ENCODE measurements at regions of chr2 and their contacts with region 1.

Region 1: DNA sequence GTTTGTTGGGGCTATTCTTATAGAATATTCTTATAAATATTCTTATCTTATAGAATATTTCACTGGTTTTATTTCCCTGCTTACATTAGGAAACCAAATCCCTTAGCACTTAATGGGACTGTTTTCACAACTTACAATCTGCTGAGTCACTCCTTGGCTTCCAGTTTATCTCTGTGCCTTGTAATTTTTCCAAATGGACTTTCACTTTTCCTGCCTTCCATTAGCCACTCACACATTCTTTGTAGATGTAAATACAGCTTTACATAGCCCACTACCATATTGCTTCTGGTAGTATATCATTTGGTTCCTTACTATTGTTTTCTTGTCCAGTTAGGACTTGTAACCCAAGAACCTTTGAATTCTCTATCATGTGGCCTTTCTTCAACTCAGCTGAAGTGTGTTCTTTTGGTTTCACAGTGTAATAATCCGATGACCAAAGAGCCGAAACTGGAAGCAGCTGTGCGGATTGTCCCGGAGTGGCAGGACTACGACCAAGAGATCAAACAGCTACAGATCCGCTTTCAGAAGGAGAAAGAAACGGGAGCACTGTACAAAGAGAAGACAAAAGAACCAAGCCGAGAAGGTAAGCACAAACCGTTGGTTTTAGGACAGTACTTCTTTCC is 96.1 kb downstream of the UGGT1 start:
- DNase-seq: no peak
- ATAC-seq: no peak
- H3K4me3 ChIP-seq: no peak overlapping the region
- H3K4me3 Mint-ChIP-seq: no peak overlapping the region
- H3K27ac ChIP-seq: no peak overlapping the region
- H3K27ac Mint-ChIP-seq: peak overlapping the region in 1 of 2 donors; percentile 12
- H3K4me1 ChIP-seq: no peaks in the 10 kb centered on the region
- H3K4me1 Mint-ChIP-seq: peaks cover 0 to 3% (median 0%) of the 10 kb centered on the region in 3 donors
- H3K27me3 ChIP-seq: no peaks in the 10 kb centered on the region
- H3K27me3 Mint-ChIP-seq: no peaks in the 10 kb centered on the region

Region 2: GRCh38 chr2:126467367-126468054 is 1719.6 kb before region 1 on chr2:
- CTCF ChIA-PET with region 1: no interaction called
- POLR2A ChIA-PET with region 1: interaction called in 1 of 2 experiments, 13 read pairs
- DNase-seq: peak in 2 of 35 experiments; percentile 10 to 16
- ATAC-seq: peak in 1 of 4 experiments; percentile 32
- H3K4me3 ChIP-seq: no peak overlapping the region
- H3K4me3 Mint-ChIP-seq: no peak overlapping the region
- H3K27ac ChIP-seq: no peak overlapping the region
- H3K27ac Mint-ChIP-seq: no peak overlapping the region
- H3K4me1 ChIP-seq: no peaks in the 10 kb centered on the region
- H3K4me1 Mint-ChIP-seq: peaks cover 0 to 6% (median 4%) of the 10 kb centered on the region in 3 donors
- H3K27me3 ChIP-seq: peaks cover 0 to 8% of the 10 kb centered on the region in 2 experiments
- H3K27me3 Mint-ChIP-seq: peaks cover 5 to 6% of the 10 kb centered on the region in 2 donors

Region 3: GRCh38 chr2:128234613-128235012 is 47.5 kb after region 1 on chr2:
- CTCF ChIA-PET with region 1: interaction called, 3 to 11 read pairs
- POLR2A ChIA-PET with region 1: no interaction called
- DNase-seq: no peak
- ATAC-seq: no peak
- H3K4me3 ChIP-seq: no peak overlapping the region
- H3K4me3 Mint-ChIP-seq: peak overlapping the region in 1 of 3 donors; percentile 17
- H3K27ac ChIP-seq: no peak overlapping the region
- H3K27ac Mint-ChIP-seq: no peak overlapping the region
- H3K4me1 ChIP-seq: peaks cover 0 to 11% of the 10 kb centered on the region in 2 experiments
- H3K4me1 Mint-ChIP-seq: peaks cover 5% of the 10 kb centered on the region in 3 donors
- H3K27me3 ChIP-seq: peaks cover 0 to 29% of the 10 kb centered on the region in 2 experiments
- H3K27me3 Mint-ChIP-seq: peaks cover 7 to 11% of the 10 kb centered on the region in 2 donors